ENCODE measurements at regions of chr9 and their contacts with region 1.

Region 1: GRCh38 chr9:137650259-137650658 is 31.5 kb downstream of the EHMT1 start:
- DNase-seq: no peak
- H3K4me3 ChIP-seq: no peak overlapping the region
- H3K27ac ChIP-seq: peak overlapping the region; percentile 70
- H3K4me1 ChIP-seq: peaks cover 74% of the 10 kb centered on the region
- CTCF ChIP-seq: no peak

Region 2: DNA sequence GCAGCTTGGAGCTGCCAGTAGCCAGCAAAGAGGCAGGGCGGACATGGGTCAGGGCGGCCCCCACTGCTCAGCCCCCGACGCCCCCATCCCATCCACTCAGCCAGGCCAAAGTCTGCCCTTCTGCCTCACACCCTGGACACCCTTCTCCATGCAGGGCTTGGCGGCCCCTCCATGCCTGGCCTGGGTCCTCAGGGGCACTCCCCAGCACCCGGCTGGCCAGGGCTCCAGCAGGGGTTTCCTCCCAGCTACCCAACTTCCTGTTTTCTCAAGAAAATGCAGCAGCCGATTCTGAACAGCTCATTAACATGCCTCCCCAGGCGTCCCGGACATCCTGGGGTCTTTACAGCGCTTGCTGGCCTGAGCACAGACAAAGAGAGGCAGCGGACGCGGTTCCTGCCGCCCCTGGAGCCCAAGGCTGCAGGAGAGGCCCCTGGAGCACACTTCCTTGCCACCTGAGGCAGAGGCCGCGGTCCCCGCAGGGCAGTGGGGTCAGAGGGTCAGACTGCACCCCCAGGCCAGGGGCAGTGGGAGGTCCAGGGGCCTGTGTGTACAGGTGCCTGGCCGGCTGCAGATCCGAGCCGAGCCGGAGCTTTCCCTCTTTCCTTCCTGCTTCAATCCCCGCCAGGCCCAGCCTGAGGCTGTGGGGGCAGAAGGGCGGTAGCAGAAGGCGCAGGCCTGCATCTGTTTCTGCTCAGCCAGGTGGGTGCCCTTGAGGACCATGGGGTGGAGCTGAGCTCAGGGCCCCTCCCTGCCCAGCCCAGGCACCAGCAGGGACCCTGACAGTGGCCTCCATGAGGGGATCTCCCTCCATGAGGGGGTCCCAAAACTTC is 329.5 kb before region 1 on chr9:
- CTCF ChIA-PET with region 1: no interaction called
- POLR2A ChIA-PET with region 1: no interaction called
- intact Hi-C with region 1: no loop called
- DNase-seq: peak; percentile 93
- H3K4me3 ChIP-seq: peak overlapping the region; percentile 57
- H3K27ac ChIP-seq: peak overlapping the region; percentile 73
- H3K4me1 ChIP-seq: peaks cover 37% of the 10 kb centered on the region
- CTCF ChIP-seq: no peak

Region 3: GRCh38 chr9:137632230-137633161 is 17.8 kb before region 1 on chr9:
- CTCF ChIA-PET with region 1: no interaction called
- POLR2A ChIA-PET with region 1: interaction called, 9 read pairs
- intact Hi-C with region 1: loop called (anchors 2 kb)
- DNase-seq: peak; percentile 63
- H3K4me3 ChIP-seq: peak overlapping the region; percentile 49
- H3K27ac ChIP-seq: peak overlapping the region; percentile 66
- H3K4me1 ChIP-seq: peaks cover 76% of the 10 kb centered on the region
- CTCF ChIP-seq: no peak

Region 4: GRCh38 chr9:137745541-137745991 is 95.3 kb after region 1 on chr9:
- CTCF ChIA-PET with region 1: no interaction called
- POLR2A ChIA-PET with region 1: no interaction called
- intact Hi-C with region 1: no loop called
- DNase-seq: peak; percentile 85
- H3K4me3 ChIP-seq: no peak overlapping the region
- H3K27ac ChIP-seq: peak overlapping the region; percentile 63
- H3K4me1 ChIP-seq: peaks cover 36% of the 10 kb centered on the region
- CTCF ChIP-seq: no peak

Measured in OCI-LY7 (cell line).